Activated T-helper 1 cell treated with anti-CD3 and anti-CD28 coated beads, Interleukin-12 subunit alpha, Interleukin-12 subunit beta, Interleukin-2, Interleukin-4 antibody, amounts not matched to agents 30 ng/mL and 10 ng/mL and 1 ng/mL, durations not matched to agents 14 hours and 24 hours and 36 hours (primary cell): ENCODE measurements at regions of chr4 and their contacts with region 1.

Region 1: DNA sequence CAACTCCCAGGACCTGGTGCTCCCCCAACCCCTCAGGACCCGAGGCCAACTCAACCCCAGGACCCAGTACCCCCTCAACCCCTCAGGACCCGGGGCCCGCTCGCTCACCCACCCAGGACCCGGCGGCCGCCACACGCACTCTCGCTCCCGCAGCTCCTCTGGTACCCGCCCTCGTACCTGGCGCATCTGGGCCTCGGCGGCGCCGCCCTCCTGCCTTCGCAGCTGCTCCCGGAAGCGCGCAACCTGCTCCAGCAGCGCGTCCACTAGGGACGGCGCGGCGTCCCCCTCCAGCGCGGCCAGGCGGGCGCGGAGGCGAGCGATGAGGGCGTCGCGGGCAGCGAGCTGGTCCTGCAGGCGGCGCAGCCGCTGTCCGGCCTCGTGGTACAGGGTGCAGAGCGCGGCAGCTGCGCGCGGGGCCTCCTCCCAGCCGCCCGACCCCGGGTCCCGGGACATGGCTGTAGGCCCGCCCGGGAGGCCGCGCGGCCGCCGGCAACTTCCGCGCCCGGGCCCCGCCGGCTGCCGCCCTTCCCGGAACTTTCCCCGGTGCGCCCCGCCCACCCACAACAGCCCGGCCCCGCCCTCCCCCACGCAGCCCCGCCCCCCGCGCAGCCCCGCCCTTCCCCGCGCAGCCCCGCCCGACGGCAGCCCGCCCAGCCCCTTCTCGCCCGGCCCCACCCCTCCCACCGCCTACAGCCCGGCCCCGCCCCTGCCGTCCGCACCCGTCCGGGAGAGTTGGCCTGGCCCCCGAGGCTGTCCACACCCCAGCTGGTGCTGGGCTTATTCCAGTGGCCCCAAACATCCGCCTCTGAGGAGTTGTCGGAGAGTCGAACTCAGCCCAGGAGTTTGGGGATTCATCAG is at the start of gene TNIP2:
- DNase-seq: peak; percentile 75
- H3K4me3 Mint-ChIP-seq: peak within 1 kb of the TSS; percentile 86
- H3K27ac Mint-ChIP-seq: peak within 1 kb of the TSS; percentile 82
- H3K4me1 Mint-ChIP-seq: peaks cover 40% of the 10 kb centered on the region
- H3K27me3 Mint-ChIP-seq: no peaks in the 10 kb centered on the region
- total RNA-seq, gene TNIP2: 96.2 and 98.6 TPM in 2 replicates

Region 2: DNA sequence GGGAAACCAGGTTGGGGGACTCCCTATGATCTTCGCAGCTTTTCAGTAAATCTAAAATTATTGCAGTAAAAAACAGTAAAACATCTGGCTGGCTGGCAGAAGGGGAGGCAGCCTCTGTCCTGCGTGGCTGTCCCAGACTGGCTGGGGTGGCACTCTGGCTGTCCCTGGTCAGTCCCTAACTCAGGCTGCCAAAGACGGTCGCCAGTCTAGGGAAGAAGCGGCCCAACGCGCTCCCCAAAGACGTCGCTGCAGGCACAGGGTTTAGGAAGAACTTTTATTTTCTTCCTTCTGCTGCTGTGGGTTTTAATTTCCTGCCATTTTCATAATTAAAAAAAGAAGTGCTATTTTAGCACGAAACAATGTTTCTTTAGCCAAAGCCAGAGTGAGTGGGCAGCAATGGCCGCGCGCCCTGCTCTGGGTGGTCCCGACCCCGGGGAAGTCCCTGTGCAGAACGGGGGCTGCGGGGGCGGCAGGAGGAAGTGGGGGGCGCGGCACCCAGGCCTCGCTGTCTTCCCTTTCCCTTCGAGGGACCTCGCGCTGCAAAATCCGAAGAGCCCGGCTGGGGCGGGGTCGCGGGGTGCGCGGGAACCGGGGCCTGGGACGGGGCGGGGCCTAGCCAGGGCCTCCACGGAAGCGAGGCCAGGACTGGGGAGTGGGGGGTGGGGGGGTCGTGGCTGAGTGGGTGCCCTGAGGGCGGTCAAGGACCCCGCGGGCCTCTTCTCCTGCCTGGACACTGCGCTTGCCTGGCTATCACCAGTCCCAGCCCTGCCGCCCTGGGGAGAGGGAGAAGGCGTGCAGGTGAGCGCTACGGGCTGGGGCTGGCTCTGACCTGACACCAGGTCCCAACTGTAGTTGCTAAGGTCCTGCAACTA is 893.8 kb before region 1 on chr4:
- intact Hi-C with region 1: no loop called
- DNase-seq: no peak
- H3K4me3 Mint-ChIP-seq: peak overlapping the region; percentile 58
- H3K27ac Mint-ChIP-seq: no peak overlapping the region
- H3K4me1 Mint-ChIP-seq: peaks cover 13% of the 10 kb centered on the region
- H3K27me3 Mint-ChIP-seq: no peaks in the 10 kb centered on the region

Region 3: GRCh38 chr4:2811830-2812611 is 56.0 kb after region 1 on chr4:
- intact Hi-C with region 1: loop called (anchors 1 kb)
- DNase-seq: peak; percentile 54
- H3K4me3 Mint-ChIP-seq: peak overlapping the region; percentile 94
- H3K27ac Mint-ChIP-seq: peak overlapping the region; percentile 96
- H3K4me1 Mint-ChIP-seq: peaks cover 60% of the 10 kb centered on the region
- H3K27me3 Mint-ChIP-seq: no peaks in the 10 kb centered on the region

Region 4: GRCh38 chr4:2934813-2935761 is 179.0 kb after region 1 on chr4:
- intact Hi-C with region 1: loop called (anchors 1 kb)
- DNase-seq: peak; percentile 95
- H3K4me3 Mint-ChIP-seq: peak overlapping the region; percentile 94
- H3K27ac Mint-ChIP-seq: peak overlapping the region; percentile 87
- H3K4me1 Mint-ChIP-seq: peaks cover 49% of the 10 kb centered on the region
- H3K27me3 Mint-ChIP-seq: no peaks in the 10 kb centered on the region

Region 5: GRCh38 chr4:2954358-2955185 is 198.5 kb after region 1 on chr4:
- intact Hi-C with region 1: loop called (anchors 1 kb)
- DNase-seq: peak; percentile 64
- H3K4me3 Mint-ChIP-seq: peak overlapping the region; percentile 80
- H3K27ac Mint-ChIP-seq: peak overlapping the region; percentile 98
- H3K4me1 Mint-ChIP-seq: peaks cover 72% of the 10 kb centered on the region
- H3K27me3 Mint-ChIP-seq: no peaks in the 10 kb centered on the region